HepG2 (cell line): ENCODE measurements at regions of chrX and their contacts with region 1.

Region 1: GRCh38 chrX:37958525-37959211 is 47.7 kb upstream of the SYTL5 start:
- DNase-seq: peak; percentile 67
- ATAC-seq: peak; percentile 87
- H3K4me3 ChIP-seq: peak overlapping the region in 1 of 3 experiments; percentile 50; a peak in 3 of 6 replicates
- H3K27ac ChIP-seq: peak overlapping the region; percentile 78
- H3K4me1 ChIP-seq: peaks cover 41% of the 10 kb centered on the region
- H3K27me3 ChIP-seq: no peaks in the 10 kb centered on the region
- CTCF ChIP-seq: no peak
- EP300 ChIP-seq: no peak
- POLR2A ChIP-seq: no peak
- RAD21 ChIP-seq: no peak

Region 2: GRCh38 chrX:37976153-37976552 is 17.5 kb after region 1 on chrX:
- CTCF ChIA-PET with region 1: no interaction called
- POLR2A ChIA-PET with region 1: interaction called, 27 read pairs
- in situ Hi-C with region 1: no loop called
- intact Hi-C with region 1: no loop called
- DNase-seq: no peak
- ATAC-seq: no peak
- H3K4me3 ChIP-seq: no peak overlapping the region
- H3K27ac ChIP-seq: no peak overlapping the region
- H3K4me1 ChIP-seq: peaks cover 21% of the 10 kb centered on the region
- H3K27me3 ChIP-seq: no peaks in the 10 kb centered on the region
- CTCF ChIP-seq: no peak
- EP300 ChIP-seq: no peak
- POLR2A ChIP-seq: no peak
- RAD21 ChIP-seq: no peak

Region 3: GRCh38 chrX:38018766-38019425 is 60.2 kb after region 1 on chrX:
- CTCF ChIA-PET with region 1: no interaction called
- POLR2A ChIA-PET with region 1: interaction called, 13 read pairs
- in situ Hi-C with region 1: no loop called
- intact Hi-C with region 1: loop called (anchors 10 kb)
- DNase-seq: peak; percentile 58
- ATAC-seq: peak; percentile 93
- H3K4me3 ChIP-seq: peak overlapping the region in 2 of 3 experiments; percentile 14 to 20; a peak in 2 of 6 replicates
- H3K27ac ChIP-seq: peak overlapping the region; percentile 66
- H3K4me1 ChIP-seq: peaks cover 31% of the 10 kb centered on the region
- H3K27me3 ChIP-seq: no peaks in the 10 kb centered on the region
- CTCF ChIP-seq: no peak
- EP300 ChIP-seq: no peak
- POLR2A ChIP-seq: no peak
- RAD21 ChIP-seq: no peak